H1 (cell line): ENCODE measurements at regions of chr1 and their contacts with region 1.

Region 1: DNA sequence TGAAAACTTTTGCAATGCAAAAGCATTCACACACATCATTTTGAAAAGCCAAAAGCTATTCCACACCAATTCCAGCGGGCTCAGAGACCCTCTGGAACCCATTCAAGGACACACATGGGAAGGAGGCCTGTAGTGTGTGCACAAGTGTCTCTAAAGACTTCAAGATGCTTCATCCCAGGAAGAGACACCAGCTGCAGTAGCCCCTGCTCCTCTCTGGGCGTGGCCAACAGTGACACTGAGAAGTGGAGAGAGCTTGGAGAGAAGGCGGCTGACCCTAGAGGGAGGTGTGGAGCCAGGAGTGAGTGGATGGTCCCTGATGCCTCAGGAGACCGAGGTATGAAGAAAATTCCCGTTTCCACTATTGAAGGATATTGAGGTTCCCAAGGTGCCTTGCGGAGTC is 14.9 kb upstream of the TNNI1 start:
- DNase-seq: peak in 1 of 2 experiments; percentile 63
- H3K4me3 ChIP-seq: no peak overlapping the region
- H3K27ac ChIP-seq: no peak overlapping the region
- H3K4me1 ChIP-seq: peaks cover 0 to 7% (median 3%) of the 10 kb centered on the region in 4 experiments; a peak in 3 of 7 replicates
- H3K27me3 ChIP-seq: no peaks in the 10 kb centered on the region
- CTCF ChIP-seq: peak; percentile 39 to 55 (median 49); a peak in 3 of 4 replicates
- EP300 ChIP-seq: no peak
- POLR2A ChIP-seq: no peak
- RAD21 ChIP-seq: peak; percentile 29 to 54

Region 2: DNA sequence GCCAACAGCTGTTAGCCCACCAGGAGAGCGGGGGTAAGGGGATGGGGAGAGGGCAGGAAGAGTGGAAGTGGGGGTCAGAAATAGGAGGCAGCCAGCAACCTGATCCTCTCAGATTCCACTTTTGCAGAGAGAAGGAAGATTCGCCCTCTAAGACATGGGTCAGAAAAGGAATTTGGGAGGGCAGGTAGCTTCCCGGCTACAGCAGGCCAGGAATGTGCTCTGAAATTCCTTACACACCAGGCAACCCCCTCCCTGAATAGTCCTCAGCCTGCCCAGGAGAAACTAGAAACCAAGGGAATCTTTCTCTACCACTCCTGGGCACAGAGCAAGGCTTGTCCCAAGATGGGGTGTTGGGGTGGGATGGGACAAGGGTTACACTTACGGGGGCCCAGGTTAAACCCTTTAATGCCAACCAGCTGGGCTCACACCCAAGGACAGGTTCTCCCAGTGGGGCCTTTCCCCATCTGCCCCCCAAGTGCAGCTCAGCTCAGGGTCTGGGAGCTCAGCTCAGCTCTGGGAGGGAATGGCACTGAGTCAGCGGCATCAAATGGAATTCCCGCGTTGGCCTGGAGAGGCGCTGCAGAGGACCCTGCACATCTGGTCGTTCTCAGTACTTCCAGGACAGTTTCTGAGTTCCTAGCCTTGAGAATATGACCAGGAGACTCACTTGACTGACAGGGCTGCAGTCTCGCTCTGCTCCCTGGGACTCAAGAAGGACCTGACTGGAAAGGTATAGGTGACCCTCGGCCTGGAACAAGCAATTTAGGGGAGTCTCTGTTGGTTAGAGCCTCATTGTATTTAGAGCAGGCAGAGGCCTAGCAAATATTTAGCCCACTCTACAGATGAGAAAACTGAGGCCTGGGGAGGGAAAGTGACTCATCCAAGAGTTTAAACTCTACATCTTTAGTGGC is 59.7 kb before region 1 on chr1:
- CTCF ChIA-PET with region 1: interaction called, 16 read pairs
- POLR2A ChIA-PET with region 1: no interaction called
- DNase-seq: peak; percentile 86 to 93
- H3K4me3 ChIP-seq: peak overlapping the region in 3 of 4 experiments; percentile 30 to 51 (median 46); a peak in 5 of 8 replicates
- H3K27ac ChIP-seq: peak overlapping the region; percentile 95
- H3K4me1 ChIP-seq: peaks cover 9 to 40% (median 29%) of the 10 kb centered on the region in 4 experiments
- H3K27me3 ChIP-seq: no peaks in the 10 kb centered on the region
- CTCF ChIP-seq: peak; percentile 67 to 96 (median 94)
- EP300 ChIP-seq: peak in 1 of 2 experiments; percentile 76; a peak in 1 of 3 replicates
- POLR2A ChIP-seq: peak; percentile 76 to 77
- RAD21 ChIP-seq: peak; percentile 37 to 55; a peak in 3 of 4 replicates

Region 3: DNA sequence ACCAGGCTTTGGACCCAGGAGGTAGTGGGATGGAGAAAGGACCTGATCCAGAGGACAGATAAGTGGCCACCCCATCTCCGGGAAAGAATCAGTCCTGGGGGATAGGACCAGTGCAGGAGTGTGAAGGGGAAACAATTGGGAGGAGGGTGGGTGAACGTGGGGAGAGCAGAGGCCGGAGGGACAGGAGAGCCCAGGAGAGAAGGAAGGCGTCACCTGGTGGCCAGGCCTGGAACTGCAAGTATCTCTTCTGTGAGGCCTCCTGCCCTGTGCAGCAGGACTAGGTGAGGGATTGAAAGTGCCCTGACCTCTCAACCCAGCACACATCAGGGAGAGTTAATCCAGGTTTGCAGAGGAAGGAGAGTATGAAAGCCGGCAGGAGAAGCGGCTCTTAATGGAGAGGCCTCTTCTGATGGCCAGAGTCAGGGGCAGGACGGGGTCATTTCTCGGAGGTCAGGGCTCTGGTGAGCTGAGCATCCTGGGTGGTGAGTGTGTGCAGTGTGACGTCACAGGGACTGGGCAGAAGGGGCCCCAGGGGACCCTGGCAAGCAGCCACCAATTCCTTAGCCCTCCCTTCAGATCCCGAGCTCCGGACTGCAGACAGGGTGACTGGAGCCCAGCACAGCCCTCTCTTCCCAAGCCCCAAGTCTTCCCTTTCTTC is 28.1 kb before region 1 on chr1:
- CTCF ChIA-PET with region 1: interaction called, 25 read pairs
- POLR2A ChIA-PET with region 1: no interaction called
- DNase-seq: peak; percentile 80 to 98
- H3K4me3 ChIP-seq: no peak overlapping the region
- H3K27ac ChIP-seq: no peak overlapping the region
- H3K4me1 ChIP-seq: peaks cover 0 to 5% (median 0%) of the 10 kb centered on the region in 4 experiments; a peak in 2 of 7 replicates
- H3K27me3 ChIP-seq: no peaks in the 10 kb centered on the region; a peak in 1 of 7 replicates
- CTCF ChIP-seq: peak; percentile 91 to 99 (median 99)
- EP300 ChIP-seq: no peak
- POLR2A ChIP-seq: no peak
- RAD21 ChIP-seq: peak; percentile 81 to 82

Region 4: GRCh38 chr1:201447911-201448871 is 11.8 kb after region 1 on chr1:
- CTCF ChIA-PET with region 1: interaction called, 163 read pairs
- POLR2A ChIA-PET with region 1: interaction called, 3 read pairs
- DNase-seq: peak; percentile 79 to 84
- H3K4me3 ChIP-seq: peak overlapping the region in 3 of 4 experiments; percentile 7 to 33 (median 17); a peak in 3 of 8 replicates
- H3K27ac ChIP-seq: no peak overlapping the region
- H3K4me1 ChIP-seq: peaks cover 4 to 20% (median 15%) of the 10 kb centered on the region in 4 experiments
- H3K27me3 ChIP-seq: no peaks in the 10 kb centered on the region; a peak in 1 of 7 replicates
- CTCF ChIP-seq: peak; percentile 86 to 92 (median 91)
- EP300 ChIP-seq: no peak
- POLR2A ChIP-seq: no peak
- RAD21 ChIP-seq: peak; percentile 68 to 75

Region 5: DNA sequence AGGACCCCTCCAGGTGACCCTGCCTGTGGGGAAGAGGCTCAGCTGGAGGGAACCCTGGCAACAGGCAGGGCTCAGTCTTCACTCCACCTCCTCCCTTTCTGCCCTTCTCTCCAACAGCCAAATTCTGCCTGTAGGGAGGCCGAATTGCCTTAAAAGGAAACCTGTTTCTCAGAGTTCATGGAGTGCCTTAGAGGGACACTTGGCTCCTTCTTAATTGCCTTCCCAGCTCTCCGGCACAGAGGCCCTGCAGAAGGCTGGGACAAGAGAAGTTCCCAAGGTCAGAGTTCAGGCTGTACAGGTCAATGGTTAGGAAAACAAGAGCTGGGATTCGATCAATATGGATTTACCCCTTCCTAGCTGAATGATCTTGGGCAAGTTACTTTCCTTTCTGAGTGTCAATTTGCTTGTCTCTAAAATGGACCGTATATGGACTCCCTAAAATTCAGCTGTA is 64.3 kb after region 1 on chr1:
- CTCF ChIA-PET with region 1: interaction called, 26 read pairs
- POLR2A ChIA-PET with region 1: no interaction called
- DNase-seq: no peak
- H3K4me3 ChIP-seq: no peak overlapping the region
- H3K27ac ChIP-seq: peak overlapping the region; percentile 63
- H3K4me1 ChIP-seq: peaks cover 11 to 27% (median 21%) of the 10 kb centered on the region in 4 experiments
- H3K27me3 ChIP-seq: peaks cover 0 to 2% (median under 1%) of the 10 kb centered on the region in 4 experiments; a peak in 4 of 7 replicates
- CTCF ChIP-seq: no peak
- EP300 ChIP-seq: no peak
- POLR2A ChIP-seq: no peak
- RAD21 ChIP-seq: no peak

Region 6: GRCh38 chr1:201625226-201625761 is 188.9 kb after region 1 on chr1:
- CTCF ChIA-PET with region 1: no interaction called
- POLR2A ChIA-PET with region 1: no interaction called
- DNase-seq: no peak
- H3K4me3 ChIP-seq: no peak overlapping the region
- H3K27ac ChIP-seq: no peak overlapping the region
- H3K4me1 ChIP-seq: peaks cover 0 to 4% (median 1%) of the 10 kb centered on the region in 4 experiments; a peak in 2 of 7 replicates
- H3K27me3 ChIP-seq: no peaks in the 10 kb centered on the region
- CTCF ChIP-seq: no peak
- EP300 ChIP-seq: no peak
- POLR2A ChIP-seq: no peak
- RAD21 ChIP-seq: no peak